ENCODE measurements at regions of chr14 and their contacts with region 1.

Region 1: GRCh38 chr14:60859525-60859924 is 121.4 kb downstream of the TRMT5 start:
- DNase-seq: no peak
- H3K4me3 Mint-ChIP-seq: no peak overlapping the region
- H3K27ac Mint-ChIP-seq: no peak overlapping the region
- H3K4me1 Mint-ChIP-seq: peaks cover 22% of the 10 kb centered on the region
- H3K27me3 Mint-ChIP-seq: no peaks in the 10 kb centered on the region

Region 2: GRCh38 chr14:60744566-60744965 is 115.0 kb before region 1 on chr14:
- CTCF ChIA-PET with region 1: no interaction called
- POLR2A ChIA-PET with region 1: no interaction called
- intact Hi-C with region 1: no loop called
- DNase-seq: no peak
- H3K4me3 Mint-ChIP-seq: no peak overlapping the region
- H3K27ac Mint-ChIP-seq: no peak overlapping the region
- H3K4me1 Mint-ChIP-seq: peaks cover 5% of the 10 kb centered on the region
- H3K27me3 Mint-ChIP-seq: no peaks in the 10 kb centered on the region

Region 3: GRCh38 chr14:60945984-60946383 is 86.5 kb after region 1 on chr14:
- CTCF ChIA-PET with region 1: no interaction called
- POLR2A ChIA-PET with region 1: no interaction called
- intact Hi-C with region 1: loop called (anchors 5 kb)
- DNase-seq: no peak
- H3K4me3 Mint-ChIP-seq: no peak overlapping the region
- H3K27ac Mint-ChIP-seq: peak overlapping the region; percentile 30
- H3K4me1 Mint-ChIP-seq: peaks cover 13% of the 10 kb centered on the region
- H3K27me3 Mint-ChIP-seq: no peaks in the 10 kb centered on the region

Region 4: DNA sequence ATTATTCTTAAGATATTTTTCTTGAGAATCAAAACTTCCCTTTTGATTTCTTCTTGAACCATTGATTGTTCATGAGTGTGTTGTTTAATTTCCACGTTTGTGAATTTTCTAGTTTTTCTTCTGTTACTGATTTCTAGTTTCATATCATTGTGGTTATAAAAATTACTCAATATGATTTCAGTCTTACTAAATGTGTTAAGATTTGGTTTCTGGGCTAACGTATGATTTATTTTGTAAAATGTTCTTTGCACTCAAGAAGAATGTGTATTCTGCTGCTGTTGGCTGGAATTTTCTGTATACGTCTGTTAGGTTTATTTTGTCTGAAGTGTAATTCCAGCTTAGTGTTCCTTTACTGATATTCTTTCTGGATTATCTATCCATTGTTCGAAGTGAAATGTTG is 96.7 kb after region 1 on chr14:
- CTCF ChIA-PET with region 1: no interaction called
- POLR2A ChIA-PET with region 1: no interaction called
- intact Hi-C with region 1: loop called (anchors 2 kb)
- DNase-seq: no peak
- H3K4me3 Mint-ChIP-seq: no peak overlapping the region
- H3K27ac Mint-ChIP-seq: no peak overlapping the region
- H3K4me1 Mint-ChIP-seq: peaks cover 11% of the 10 kb centered on the region
- H3K27me3 Mint-ChIP-seq: no peaks in the 10 kb centered on the region

Measured in activated CD4-positive, alpha-beta memory T cell treated with anti-CD3 and anti-CD28 coated beads for 36 hours (primary cell).